Right cardiac atrium (tissue), 5 donors: ENCODE measurements at regions of chr10 and their contacts with region 1.

Region 1: GRCh38 chr10:116688241-116688711 is 54.1 kb downstream of the HSPA12A start:
- DNase-seq: peak in 1 of 3 donors; percentile 69
- ATAC-seq: peak; percentile 67 to 83
- H3K4me3 ChIP-seq: no peak overlapping the region
- H3K27ac ChIP-seq: peak overlapping the region; percentile 3
- H3K4me1 ChIP-seq: peaks cover 10% of the 10 kb centered on the region
- H3K27me3 ChIP-seq: no peaks in the 10 kb centered on the region

Region 2: GRCh38 chr10:116737627-116738327 is 49.5 kb after region 1 on chr10:
- intact Hi-C with region 1: loop called in 1 of 4 experiments (anchors 5 kb)
- DNase-seq: no peak
- ATAC-seq: no peak
- H3K4me3 ChIP-seq: no peak overlapping the region
- H3K27ac ChIP-seq: no peak overlapping the region
- H3K4me1 ChIP-seq: peaks cover 5% of the 10 kb centered on the region
- H3K27me3 ChIP-seq: no peaks in the 10 kb centered on the region

Region 3: GRCh38 chr10:116787893-116788665 is 99.8 kb after region 1 on chr10:
- intact Hi-C with region 1: loop called (anchors 2 to 5 kb)
- DNase-seq: peak; percentile 79 to 92 (median 90)
- ATAC-seq: peak; percentile 77 to 88
- H3K4me3 ChIP-seq: peak overlapping the region; percentile 28
- H3K27ac ChIP-seq: no peak overlapping the region
- H3K4me1 ChIP-seq: no peaks in the 10 kb centered on the region
- H3K27me3 ChIP-seq: peaks cover under 1% of the 10 kb centered on the region

Region 4: DNA sequence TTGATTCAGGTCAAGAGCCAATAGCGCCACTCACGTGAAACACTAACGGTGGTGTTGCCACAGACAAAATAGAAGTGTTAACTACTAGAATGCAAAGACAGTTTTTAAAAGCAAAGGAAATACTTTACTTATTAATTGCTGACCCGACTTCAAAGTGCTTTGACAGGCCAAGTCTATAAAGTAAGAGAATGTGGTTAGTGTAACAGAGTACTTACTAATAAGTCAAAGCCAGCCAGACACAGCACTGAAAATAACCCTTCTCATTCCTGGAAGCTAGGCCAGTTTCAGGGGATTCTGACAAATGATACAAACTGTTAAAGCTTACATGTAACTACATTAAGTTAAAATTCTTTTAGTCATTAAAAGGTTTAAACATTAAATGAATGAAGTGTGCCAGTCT is 211.3 kb after region 1 on chr10:
- intact Hi-C with region 1: no loop called
- DNase-seq: no peak
- ATAC-seq: no peak
- H3K4me3 ChIP-seq: no peak overlapping the region
- H3K27ac ChIP-seq: no peak overlapping the region
- H3K4me1 ChIP-seq: no peaks in the 10 kb centered on the region
- H3K27me3 ChIP-seq: no peaks in the 10 kb centered on the region

Region 5: DNA sequence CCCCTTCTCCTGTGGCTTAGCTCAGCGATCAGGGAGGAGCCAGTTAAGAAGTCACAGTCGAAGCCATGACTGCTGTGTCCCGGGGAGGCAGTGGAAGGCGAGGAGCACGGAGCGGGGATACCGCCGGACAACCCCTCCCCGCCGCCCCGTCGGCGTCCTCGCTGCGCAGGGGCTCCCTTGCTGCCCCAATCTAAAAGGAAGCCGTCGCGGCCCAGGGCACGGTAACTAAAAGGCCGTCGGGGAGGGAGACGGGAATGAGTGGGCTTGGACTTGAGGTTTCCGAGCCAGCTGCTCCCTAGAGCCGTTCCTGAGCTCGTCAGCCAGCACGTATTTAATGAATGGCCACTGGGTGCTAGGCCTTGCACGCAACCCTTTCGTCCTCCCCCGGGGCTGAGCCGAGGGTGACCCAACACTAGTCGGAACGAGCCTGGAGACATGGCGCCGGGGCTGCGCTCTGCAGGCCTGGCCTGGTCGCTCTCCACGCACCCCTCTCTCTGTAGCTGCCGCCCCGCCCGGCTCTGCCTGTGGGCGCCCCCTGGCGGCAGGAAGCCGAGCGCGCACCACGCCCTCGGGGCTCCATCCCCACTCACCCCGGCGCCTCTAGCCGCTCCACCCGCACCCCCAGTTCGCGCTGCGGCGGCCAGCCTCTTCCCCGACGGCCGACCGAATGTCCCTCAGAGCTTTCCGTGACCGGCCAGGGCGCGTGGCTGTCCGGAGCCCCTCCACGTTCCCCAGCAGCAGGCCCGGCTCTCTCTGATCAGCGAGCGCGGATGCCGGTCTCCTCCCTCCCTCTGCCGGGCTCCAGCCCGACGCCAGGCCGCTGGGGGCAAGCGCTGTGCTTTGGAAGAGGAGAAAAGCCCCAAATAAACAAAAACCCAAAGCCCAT is 479.8 kb after region 1 on chr10:
- intact Hi-C with region 1: loop called in 3 of 4 experiments (anchors 10 kb)
- DNase-seq: peak; percentile 55 to 81 (median 81)
- ATAC-seq: peak; percentile 90 to 92
- H3K4me3 ChIP-seq: peak overlapping the region; percentile 0
- H3K27ac ChIP-seq: no peak overlapping the region
- H3K4me1 ChIP-seq: no peaks in the 10 kb centered on the region
- H3K27me3 ChIP-seq: no peaks in the 10 kb centered on the region

Region 6: GRCh38 chr10:117174439-117175214 is 486.4 kb after region 1 on chr10:
- intact Hi-C with region 1: loop called in 3 of 4 experiments (anchors 10 kb)
- DNase-seq: peak; percentile 65 to 88 (median 82)
- ATAC-seq: peak; percentile 86 to 91
- H3K4me3 ChIP-seq: peak overlapping the region; percentile 23
- H3K27ac ChIP-seq: no peak overlapping the region
- H3K4me1 ChIP-seq: peaks cover 3% of the 10 kb centered on the region
- H3K27me3 ChIP-seq: no peaks in the 10 kb centered on the region